Psoas muscle (tissue), 8 donors: ENCODE measurements at regions of chr1 and their contacts with region 1.

Region 1: DNA sequence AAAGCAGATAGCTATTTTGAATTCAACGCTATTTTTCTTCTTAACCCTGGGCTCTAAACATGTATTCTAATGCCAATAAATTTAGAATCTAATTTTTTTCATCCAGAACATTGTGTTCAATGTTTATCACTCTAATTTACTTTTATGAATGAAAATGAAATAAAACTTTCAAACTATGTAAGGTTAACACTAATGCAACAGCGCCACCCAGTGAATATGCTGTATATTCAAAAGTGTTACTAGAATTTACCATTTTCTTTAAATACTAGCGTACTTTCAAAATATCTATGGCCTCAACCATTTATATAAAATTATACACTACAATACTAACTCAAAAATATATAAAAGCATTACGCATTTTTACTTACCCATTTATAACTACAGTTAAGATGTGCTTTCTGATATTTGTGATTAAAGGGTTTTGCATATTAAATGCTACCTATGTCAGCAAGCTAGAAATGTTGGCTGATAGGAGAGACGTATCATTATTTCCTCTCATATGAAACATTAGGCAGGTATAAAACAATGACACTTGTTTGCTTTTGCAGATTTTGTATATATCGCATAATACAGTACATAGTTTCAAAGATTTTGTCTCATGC is 5.9 kb upstream of the NUF2 start:
- DNase-seq: no peak
- ATAC-seq: no peak
- H3K4me3 ChIP-seq: no peak overlapping the region
- H3K27ac ChIP-seq: no peak overlapping the region
- H3K4me1 ChIP-seq: peaks cover 8% of the 10 kb centered on the region
- H3K27me3 ChIP-seq: no peaks in the 10 kb centered on the region
- CTCF ChIP-seq: peak; percentile 70

Region 2: DNA sequence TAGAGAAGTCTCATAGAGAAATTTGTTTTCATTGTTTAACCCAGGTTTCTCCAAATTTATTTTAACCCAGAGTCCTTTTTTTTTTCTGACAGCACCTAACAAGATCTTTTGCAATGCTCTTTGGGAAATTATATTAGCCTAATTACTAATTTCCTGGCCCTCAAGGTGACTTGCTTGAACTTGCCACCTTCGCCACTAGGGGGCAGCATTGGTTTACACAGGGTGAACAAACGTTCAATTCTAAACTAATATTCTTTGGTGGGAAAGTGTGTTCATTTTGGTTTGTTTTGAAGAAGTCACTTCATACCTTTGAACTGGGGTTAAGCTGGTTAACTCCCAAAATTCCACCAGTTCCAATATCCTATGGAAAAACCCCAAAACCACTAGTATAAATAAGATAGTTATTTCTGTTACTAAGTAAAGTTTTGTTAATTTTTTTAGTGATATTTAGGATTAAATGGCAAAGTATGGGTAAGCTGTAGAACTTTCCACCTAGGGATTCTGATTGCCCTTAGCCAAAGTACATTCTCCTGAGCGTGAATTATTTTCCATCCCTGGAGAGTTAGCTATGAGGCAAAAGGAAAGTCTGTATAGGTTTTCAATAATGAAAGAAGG is 467.9 kb before region 1 on chr1:
- intact Hi-C with region 1: loop called (anchors 5 kb)
- DNase-seq: peak; percentile 73 to 84
- ATAC-seq: peak in 2 of 4 donors; percentile 54 to 76
- H3K4me3 ChIP-seq: no peak overlapping the region
- H3K27ac ChIP-seq: no peak overlapping the region
- H3K4me1 ChIP-seq: no peaks in the 10 kb centered on the region
- H3K27me3 ChIP-seq: no peaks in the 10 kb centered on the region
- CTCF ChIP-seq: peak; percentile 94

Region 3: GRCh38 chr1:162854245-162854882 is 461.5 kb before region 1 on chr1:
- intact Hi-C with region 1: loop called (anchors 5 kb)
- DNase-seq: peak; percentile 24 to 56
- ATAC-seq: peak in 3 of 4 donors; percentile 46 to 77 (median 68)
- H3K4me3 ChIP-seq: no peak overlapping the region
- H3K27ac ChIP-seq: no peak overlapping the region
- H3K4me1 ChIP-seq: no peaks in the 10 kb centered on the region
- H3K27me3 ChIP-seq: no peaks in the 10 kb centered on the region
- CTCF ChIP-seq: peak; percentile 75

Region 4: GRCh38 chr1:163071405-163072255 is 244.2 kb before region 1 on chr1:
- intact Hi-C with region 1: loop called in 1 of 2 experiments (anchors 5 kb)
- DNase-seq: peak; percentile 37 to 54
- ATAC-seq: peak; percentile 40 to 70 (median 60)
- H3K4me3 ChIP-seq: no peak overlapping the region
- H3K27ac ChIP-seq: no peak overlapping the region
- H3K4me1 ChIP-seq: peaks cover 11% of the 10 kb centered on the region
- H3K27me3 ChIP-seq: no peaks in the 10 kb centered on the region
- CTCF ChIP-seq: peak; percentile 59